Posterior vena cava (tissue), 2 donors: ENCODE measurements at regions of chr11 and their contacts with region 1.

Region 1: GRCh38 chr11:68673301-68673945 is 10.9 kb upstream of the GAL start:
- DNase-seq: peak; percentile 32

Region 2: GRCh38 chr11:68727785-68728184 is 54.4 kb after region 1 on chr11:
- intact Hi-C with region 1: no loop called
- DNase-seq: no peak

Region 3: DNA sequence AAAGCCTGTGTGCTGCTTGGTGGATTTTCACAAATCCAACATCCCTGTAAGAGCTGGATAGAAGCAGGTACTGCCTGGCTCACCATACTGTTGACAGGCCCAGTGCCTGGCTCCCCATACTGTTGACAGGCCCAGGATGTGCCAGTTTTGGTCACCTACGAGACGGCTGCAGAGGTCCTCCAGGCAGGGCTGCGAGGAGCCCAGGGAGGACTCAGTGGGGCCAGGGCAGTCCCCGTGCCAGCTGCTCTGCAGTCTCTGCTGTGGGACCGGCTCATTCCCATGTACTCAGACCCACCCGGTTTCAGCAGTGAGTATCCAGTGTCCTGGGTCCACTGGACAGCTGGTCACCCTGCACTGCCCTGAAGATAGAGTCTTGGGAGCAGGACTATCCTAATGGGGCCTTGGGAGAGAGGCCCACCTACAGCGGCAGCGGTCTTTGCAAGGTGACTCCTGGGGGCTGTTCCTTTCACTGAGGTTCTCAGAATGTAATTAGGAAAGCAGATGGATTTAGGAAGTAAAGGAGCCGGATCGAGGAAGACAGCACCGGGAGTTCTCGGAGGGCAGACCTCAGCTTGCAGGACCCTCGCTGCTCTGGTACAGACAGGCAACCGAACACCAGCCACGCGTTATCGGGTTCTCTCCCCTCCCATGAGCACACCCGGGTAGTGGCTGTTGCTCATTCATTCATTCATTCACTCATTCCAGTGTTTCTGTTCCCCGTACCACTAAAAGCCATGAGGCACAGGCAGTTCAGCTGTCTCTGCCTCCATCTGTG is 1831.0 kb after region 1 on chr11:
- intact Hi-C with region 1: loop called in 1 of 2 experiments (anchors 5 kb)
- DNase-seq: peak; percentile 62